ENCODE measurements at regions of chr10 and their contacts with region 1.

Region 1: DNA sequence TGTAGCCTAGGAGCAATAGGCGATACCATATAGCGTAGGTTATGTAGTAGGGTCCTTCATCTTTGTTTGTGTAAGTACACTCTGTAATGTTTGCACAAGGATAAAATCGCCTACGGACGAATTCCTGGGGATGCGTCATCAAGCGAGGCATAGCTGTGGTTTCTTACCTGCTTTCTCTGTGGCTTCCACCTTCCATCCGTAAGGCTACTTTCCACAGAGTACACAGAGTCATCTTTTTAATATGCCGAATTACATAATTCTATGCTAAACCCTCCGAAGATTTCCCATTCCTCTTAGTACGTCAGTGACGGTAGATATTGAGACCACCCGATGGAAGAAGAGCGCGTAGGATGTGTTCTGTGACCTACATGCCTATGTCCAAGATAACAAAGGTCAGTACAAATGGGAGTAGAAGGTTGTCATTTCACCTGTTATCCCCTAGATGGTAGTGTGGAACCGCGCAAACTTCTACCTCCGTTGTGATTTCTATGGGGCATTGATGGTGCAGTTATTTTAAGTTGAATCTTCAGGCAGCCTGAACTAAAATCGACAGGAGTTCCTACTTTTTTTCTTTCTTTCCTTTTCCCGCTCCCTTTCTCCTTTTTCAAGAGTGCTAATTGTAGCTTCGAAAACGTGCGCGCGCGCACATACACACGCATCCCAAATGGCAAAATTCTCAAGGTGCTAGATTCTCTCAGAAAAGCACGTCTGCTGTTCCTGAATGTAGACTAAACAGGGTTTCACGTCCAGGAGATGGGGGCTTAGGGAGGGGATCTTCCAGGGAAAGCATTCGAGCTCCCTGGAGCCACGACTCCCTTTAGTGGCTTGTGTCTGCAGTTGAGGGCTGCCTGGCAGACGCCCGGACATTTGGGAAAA is 111.7 kb upstream of the MBL2 start:
- DNase-seq: peak; percentile 39
- H3K4me3 ChIP-seq: peak overlapping the region; percentile 27
- H3K27ac ChIP-seq: no peak overlapping the region
- H3K27me3 ChIP-seq: peaks cover 4% of the 10 kb centered on the region
- CTCF ChIP-seq: peak; percentile 84

Region 2: GRCh38 chr10:52818019-52818418 is 66.2 kb before region 1 on chr10:
- CTCF ChIA-PET with region 1: interaction called, 34 read pairs
- POLR2A ChIA-PET with region 1: no interaction called
- DNase-seq: no peak
- H3K4me3 ChIP-seq: no peak overlapping the region
- H3K27ac ChIP-seq: no peak overlapping the region
- H3K27me3 ChIP-seq: no peaks in the 10 kb centered on the region
- CTCF ChIP-seq: peak; percentile 69

Region 3: GRCh38 chr10:52864201-52865106 is 19.8 kb before region 1 on chr10:
- CTCF ChIA-PET with region 1: interaction called, 12 read pairs
- POLR2A ChIA-PET with region 1: no interaction called
- DNase-seq: peak; percentile 97
- H3K4me3 ChIP-seq: no peak overlapping the region
- H3K27ac ChIP-seq: peak overlapping the region; percentile 96
- H3K27me3 ChIP-seq: no peaks in the 10 kb centered on the region
- CTCF ChIP-seq: no peak

Region 4: GRCh38 chr10:53619671-53620070 is 735.4 kb after region 1 on chr10:
- CTCF ChIA-PET with region 1: interaction called, 15 read pairs
- POLR2A ChIA-PET with region 1: no interaction called
- DNase-seq: no peak
- H3K4me3 ChIP-seq: no peak overlapping the region
- H3K27ac ChIP-seq: no peak overlapping the region
- H3K27me3 ChIP-seq: no peaks in the 10 kb centered on the region
- CTCF ChIP-seq: no peak